ENCODE measurements at regions of chr3 and their contacts with region 1.

Region 1: DNA sequence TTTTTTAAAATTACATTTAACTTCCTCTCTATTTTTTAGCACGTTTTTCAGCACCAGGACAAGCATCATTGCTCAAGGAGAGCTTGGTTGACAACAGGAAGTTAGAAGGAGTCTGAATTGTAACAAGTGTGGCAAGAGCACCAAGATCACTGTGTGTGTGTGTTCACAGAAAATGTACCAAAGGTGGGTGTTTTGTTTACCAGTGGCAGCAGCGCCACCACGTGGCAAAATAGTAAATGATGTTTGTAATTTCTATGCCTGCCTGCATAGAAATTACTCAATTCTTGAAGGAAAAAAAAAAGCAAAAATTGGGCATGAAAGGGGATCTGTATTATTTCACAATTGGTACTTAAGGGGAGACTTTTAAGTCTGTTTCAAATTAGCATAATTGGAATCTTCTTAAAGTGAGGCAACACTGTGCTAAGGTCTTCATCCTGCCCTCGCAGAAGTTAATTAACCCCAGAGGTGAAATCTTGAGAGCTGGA is 7.4 kb upstream of the U2SURP start:
- H3K4me3 ChIP-seq: no peak overlapping the region
- H3K27ac ChIP-seq: no peak overlapping the region
- H3K4me1 ChIP-seq: no peaks in the 10 kb centered on the region
- CTCF ChIP-seq: no peak

Region 2: DNA sequence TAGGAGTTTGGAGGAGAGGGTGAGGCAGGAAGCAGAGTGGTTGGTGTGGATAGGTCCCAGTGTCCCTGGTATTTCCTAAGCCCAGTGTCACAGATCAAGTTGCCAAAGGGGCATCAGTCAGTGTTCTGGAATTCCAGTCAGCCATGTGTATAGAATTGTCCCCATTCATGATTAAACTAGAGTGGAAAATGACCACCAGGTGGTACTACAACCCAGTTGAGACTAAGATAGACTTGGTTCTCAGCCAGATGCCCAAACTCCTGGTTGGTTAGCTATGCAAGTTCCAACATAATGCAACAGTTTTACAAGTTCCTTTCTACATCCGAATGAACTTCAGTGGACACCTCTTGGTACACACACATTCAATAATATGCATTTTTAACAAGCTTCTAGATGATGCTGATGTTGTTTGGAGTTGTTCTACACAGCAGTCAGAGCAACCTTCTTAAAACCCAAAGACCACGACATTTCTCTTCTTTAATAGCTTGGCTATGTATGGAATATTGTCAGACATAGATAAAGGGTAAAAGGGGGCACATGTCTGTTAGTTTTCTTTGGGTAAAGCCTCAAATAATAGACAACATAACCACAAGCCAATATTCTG is 407.1 kb before region 1 on chr3:
- CTCF ChIA-PET with region 1: interaction called, 14 read pairs
- POLR2A ChIA-PET with region 1: no interaction called
- H3K4me3 ChIP-seq: no peak overlapping the region
- H3K27ac ChIP-seq: no peak overlapping the region
- H3K4me1 ChIP-seq: no peaks in the 10 kb centered on the region
- CTCF ChIP-seq: no peak; the same call in 1 of the 2 replicates